ENCODE measurements at regions of chr1 and their contacts with region 1.

Region 1: DNA sequence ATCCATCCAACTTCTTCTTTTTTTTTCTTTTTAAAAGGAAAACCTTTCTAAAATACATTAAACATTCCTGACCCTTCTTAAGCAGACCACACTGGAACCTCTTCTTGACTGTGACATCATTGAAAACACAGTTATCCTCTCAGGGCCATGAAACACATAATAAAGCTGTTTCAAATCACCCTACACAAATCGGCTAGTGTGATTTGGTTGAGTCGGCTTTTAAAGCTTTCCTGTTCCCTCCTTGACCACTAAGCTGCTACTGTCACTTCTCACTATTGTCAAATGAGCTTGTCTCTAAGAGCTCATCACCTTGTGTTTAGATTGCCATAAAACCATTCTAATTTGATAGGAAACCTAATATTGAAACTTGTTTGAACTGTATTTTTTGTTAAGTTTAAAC is 5.9 kb downstream of the USP24 start:
- DNase-seq: no peak
- ATAC-seq: no peak
- H3K4me3 Mint-ChIP-seq: peak overlapping the region; percentile 45
- H3K27ac Mint-ChIP-seq: peak overlapping the region; percentile 59
- H3K4me1 Mint-ChIP-seq: peaks cover 89% of the 10 kb centered on the region
- H3K27me3 Mint-ChIP-seq: no peaks in the 10 kb centered on the region
- CTCF ChIP-seq: no peak

Region 2: GRCh38 chr1:55198044-55198443 is 11.2 kb before region 1 on chr1:
- CTCF ChIA-PET with region 1: interaction called, 4 read pairs
- POLR2A ChIA-PET with region 1: interaction called, 3 read pairs
- intact Hi-C with region 1: loop called (anchors 2 kb)
- DNase-seq: no peak
- ATAC-seq: no peak
- H3K4me3 Mint-ChIP-seq: no peak overlapping the region
- H3K27ac Mint-ChIP-seq: no peak overlapping the region
- H3K4me1 Mint-ChIP-seq: peaks cover 70% of the 10 kb centered on the region
- H3K27me3 Mint-ChIP-seq: no peaks in the 10 kb centered on the region
- CTCF ChIP-seq: no peak

Measured in activated B cell treated with CpG ODN at 0.5 μM for 24 hours (primary cell).